H1 (cell line): ENCODE measurements at regions of chr6 and their contacts with region 1.

Region 1: DNA sequence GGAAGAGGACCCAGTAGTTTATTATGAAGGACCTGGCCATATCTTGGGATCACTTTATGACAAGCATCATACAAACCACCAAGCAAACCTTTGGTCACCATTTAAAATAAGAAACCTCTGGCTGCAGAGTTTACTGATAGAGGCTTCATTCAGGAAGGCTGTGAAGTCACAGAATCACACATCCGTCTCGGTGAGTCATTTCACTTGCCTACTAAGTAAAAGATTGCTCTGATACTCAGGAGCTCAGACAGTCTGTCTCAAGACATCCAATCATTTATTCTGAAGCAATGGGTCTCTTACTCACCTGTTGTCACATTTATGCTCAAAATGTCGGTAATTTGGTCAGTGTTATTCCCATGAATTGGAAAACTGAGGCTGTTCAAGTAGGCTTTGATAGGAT is 33.7 kb downstream of the ADGRF5 start:
- DNase-seq: no peak
- H3K4me3 ChIP-seq: no peak overlapping the region
- H3K27ac ChIP-seq: no peak overlapping the region
- H3K4me1 ChIP-seq: no peaks in the 10 kb centered on the region
- H3K27me3 ChIP-seq: no peaks in the 10 kb centered on the region
- CTCF ChIP-seq: no peak
- EP300 ChIP-seq: no peak
- POLR2A ChIP-seq: no peak
- RAD21 ChIP-seq: no peak

Region 2: DNA sequence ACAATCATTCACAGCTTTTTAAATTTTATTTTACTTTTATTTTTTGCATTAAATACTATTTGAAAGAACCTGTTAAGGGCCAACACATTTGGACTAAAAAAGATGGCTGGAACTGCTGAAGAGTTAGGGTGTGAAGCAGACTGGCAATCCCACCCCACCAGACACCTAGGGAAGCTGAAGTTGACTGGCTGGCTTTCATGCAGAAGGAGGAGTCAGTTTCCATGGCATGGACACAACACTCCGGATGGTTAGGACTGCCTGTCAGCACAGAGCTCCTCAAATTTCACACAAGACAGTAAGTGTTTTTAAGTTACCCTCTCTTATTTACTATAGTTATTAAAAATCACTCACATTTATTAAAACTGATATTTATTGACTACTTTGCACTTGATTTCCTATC is 141.3 kb before region 1 on chr6 and contains the start of gene ANKRD66:
- CTCF ChIA-PET with region 1: no interaction called
- POLR2A ChIA-PET with region 1: no interaction called
- DNase-seq: no peak
- H3K4me3 ChIP-seq: no peak within 1 kb of the TSS
- H3K27ac ChIP-seq: no peak within 1 kb of the TSS
- H3K4me1 ChIP-seq: peaks cover 2 to 10% (median 4%) of the 10 kb centered on the region in 4 experiments; a peak in 6 of 7 replicates
- H3K27me3 ChIP-seq: no peaks in the 10 kb centered on the region
- CTCF ChIP-seq: no peak
- EP300 ChIP-seq: no peak
- POLR2A ChIP-seq: no peak
- RAD21 ChIP-seq: no peak
- total RNA-seq, gene ANKRD66: not detected in 2 replicates

Region 3: GRCh38 chr6:46903175-46903574 is 15.1 kb after region 1 on chr6:
- CTCF ChIA-PET with region 1: interaction called, 12 read pairs
- POLR2A ChIA-PET with region 1: no interaction called
- DNase-seq: no peak
- H3K4me3 ChIP-seq: no peak overlapping the region
- H3K27ac ChIP-seq: no peak overlapping the region
- H3K4me1 ChIP-seq: peaks cover 0 to 3% (median 0%) of the 10 kb centered on the region in 4 experiments; a peak in 2 of 7 replicates
- H3K27me3 ChIP-seq: no peaks in the 10 kb centered on the region
- CTCF ChIP-seq: no peak
- EP300 ChIP-seq: no peak
- POLR2A ChIP-seq: no peak
- RAD21 ChIP-seq: no peak